ENCODE measurements at regions of chr17 and their contacts with region 1.

Region 1: GRCh38 chr17:30824356-30825145 is at the start of gene CRLF3:
- H3K4me3 ChIP-seq: peak within 1 kb of the TSS; percentile 93
- H3K27ac ChIP-seq: peak within 1 kb of the TSS; percentile 95
- H3K4me1 ChIP-seq: peaks cover 22% of the 10 kb centered on the region
- CTCF ChIP-seq: peak; percentile 98

Region 2: GRCh38 chr17:30761058-30761457 is 63.5 kb before region 1 on chr17:
- CTCF ChIA-PET with region 1: no interaction called
- POLR2A ChIA-PET with region 1: interaction called, 10 read pairs
- H3K4me3 ChIP-seq: no peak overlapping the region
- H3K27ac ChIP-seq: no peak overlapping the region
- H3K4me1 ChIP-seq: no peaks in the 10 kb centered on the region
- CTCF ChIP-seq: no peak

Region 3: DNA sequence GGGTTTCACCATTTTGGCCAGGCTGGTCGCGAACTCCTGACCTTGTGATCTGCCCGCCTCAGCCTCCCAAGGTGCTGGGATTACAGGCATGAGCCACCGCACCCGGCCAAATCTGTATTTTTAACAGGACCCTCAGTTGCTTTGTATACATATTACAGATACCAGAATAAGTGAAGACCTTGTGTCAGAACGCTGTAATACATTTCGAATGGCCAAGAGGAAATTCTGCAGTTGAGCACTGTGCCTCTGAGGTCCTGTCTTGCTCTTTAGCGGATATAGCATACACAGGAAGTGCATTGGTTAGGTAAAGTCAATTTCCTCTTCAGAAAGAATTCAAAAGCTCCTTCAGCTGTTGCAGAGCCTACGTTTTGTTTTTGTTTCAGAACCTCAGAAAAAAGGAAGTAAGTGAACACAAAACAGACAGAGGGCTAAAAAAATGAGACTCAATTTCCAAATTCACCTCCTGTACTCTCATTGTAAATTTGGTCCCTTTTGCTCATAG is 15.7 kb before region 1 on chr17:
- CTCF ChIA-PET with region 1: interaction called, 19 read pairs
- POLR2A ChIA-PET with region 1: interaction called, 9 read pairs
- H3K4me3 ChIP-seq: no peak overlapping the region
- H3K27ac ChIP-seq: no peak overlapping the region
- H3K4me1 ChIP-seq: no peaks in the 10 kb centered on the region
- CTCF ChIP-seq: no peak

Measured in HEK293 (cell line).